WTC11 (cell line): ENCODE measurements at regions of chr17 and their contacts with region 1.

Region 1: DNA sequence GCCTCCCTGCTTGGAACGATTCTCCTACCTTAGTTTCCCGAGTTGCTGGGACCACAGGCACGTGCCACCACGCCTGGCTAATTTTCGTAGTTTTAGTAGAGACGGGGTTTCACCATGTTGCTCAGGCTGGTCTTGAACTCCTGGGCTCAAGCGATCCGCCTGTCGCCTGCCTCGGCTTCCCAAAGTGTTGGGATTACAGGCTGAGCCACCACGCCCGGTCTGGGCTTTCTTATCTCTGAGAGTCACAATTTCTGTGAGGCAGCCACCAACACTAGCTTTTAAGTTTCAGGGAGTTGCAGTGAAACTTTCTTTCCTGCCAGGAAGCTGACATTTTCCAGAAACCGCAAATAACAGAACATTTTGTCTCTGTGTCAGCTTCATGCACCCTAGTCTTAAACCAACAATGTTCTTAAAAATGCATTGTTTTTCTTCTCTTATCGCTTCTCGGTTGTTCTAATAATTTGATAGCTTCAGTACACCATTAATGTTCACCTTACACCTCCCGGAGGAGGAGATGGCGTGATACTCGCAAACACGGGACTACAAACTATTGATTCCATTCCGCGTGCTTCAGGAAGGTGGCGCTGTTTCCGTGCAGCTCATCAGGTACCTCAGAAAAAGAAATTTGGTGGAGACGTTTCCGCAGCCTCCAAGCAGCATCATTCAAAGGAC is 7.4 kb upstream of the DHRS7B start:
- DNase-seq: peak; percentile 70
- ATAC-seq: peak; percentile 86
- H3K4me3 Mint-ChIP-seq: 0 out of 2 replicates have a peak overlapping the region, but pooled peaks have one; percentile 17
- H3K27ac Mint-ChIP-seq: peak overlapping the region; percentile 24; the same call in 1 of the 2 replicates
- H3K4me1 Mint-ChIP-seq: peaks cover 18% of the 10 kb centered on the region
- H3K27me3 Mint-ChIP-seq: peaks cover 3% of the 10 kb centered on the region; the same call in 1 of the 2 replicates
- CTCF ChIP-seq: peak; percentile 65

Region 2: DNA sequence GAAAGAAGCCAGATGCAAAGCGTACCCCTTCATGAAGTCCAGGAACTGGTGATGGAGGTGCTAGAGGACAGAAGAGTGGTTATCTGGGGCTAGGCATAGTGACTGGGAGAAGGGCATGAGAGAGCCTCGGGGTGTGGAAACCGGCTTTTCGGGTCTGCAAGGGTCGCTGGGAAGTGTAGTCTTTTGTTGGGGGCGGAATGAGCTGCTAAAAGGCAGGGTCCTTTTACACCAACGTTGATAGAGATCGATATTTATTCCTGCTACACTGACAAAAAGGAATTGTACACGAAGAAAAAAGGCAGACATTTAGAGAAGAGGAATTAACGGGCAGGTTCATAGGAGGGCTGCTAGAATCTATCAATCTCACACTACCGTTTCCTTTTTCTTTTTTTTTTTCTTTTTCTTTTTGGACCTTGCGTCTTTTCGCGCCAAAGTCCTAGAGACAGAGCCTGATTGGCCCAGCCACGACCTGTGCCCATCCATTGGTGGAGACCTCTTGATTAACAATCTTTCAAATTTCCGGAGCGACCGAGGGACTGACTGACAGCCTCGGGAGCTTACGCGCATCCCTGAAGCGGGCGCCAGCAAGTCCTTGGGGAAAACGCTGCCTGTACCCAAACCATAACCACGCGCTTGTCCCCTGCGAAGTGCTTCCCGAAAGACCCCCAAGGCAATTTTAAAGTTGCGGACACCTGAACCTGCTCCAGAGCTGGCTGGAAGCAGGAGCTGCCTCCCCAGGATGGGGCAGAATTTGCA is 20.3 kb before region 1 on chr17:
- CTCF ChIA-PET with region 1: interaction called, 31 read pairs
- POLR2A ChIA-PET with region 1: interaction called, 5 read pairs
- DNase-seq: peak; percentile 81
- ATAC-seq: peak; percentile 95
- H3K4me3 Mint-ChIP-seq: peak overlapping the region; percentile 97
- H3K27ac Mint-ChIP-seq: peak overlapping the region; percentile 99
- H3K4me1 Mint-ChIP-seq: no peaks in the 10 kb centered on the region
- H3K27me3 Mint-ChIP-seq: no peaks in the 10 kb centered on the region
- CTCF ChIP-seq: no peak

Region 3: GRCh38 chr17:21108651-21109050 is 10.7 kb before region 1 on chr17:
- CTCF ChIA-PET with region 1: interaction called, 19 read pairs
- POLR2A ChIA-PET with region 1: no interaction called
- DNase-seq: no peak
- ATAC-seq: no peak
- H3K4me3 Mint-ChIP-seq: no peak overlapping the region
- H3K27ac Mint-ChIP-seq: peak overlapping the region; percentile 45
- H3K4me1 Mint-ChIP-seq: peaks cover 59% of the 10 kb centered on the region
- H3K27me3 Mint-ChIP-seq: no peaks in the 10 kb centered on the region
- CTCF ChIP-seq: no peak

Region 4: GRCh38 chr17:21146362-21147015 is 27.1 kb after region 1 on chr17:
- CTCF ChIA-PET with region 1: no interaction called
- POLR2A ChIA-PET with region 1: no interaction called
- DNase-seq: no peak
- ATAC-seq: no peak
- H3K4me3 Mint-ChIP-seq: no peak overlapping the region
- H3K27ac Mint-ChIP-seq: no peak overlapping the region
- H3K4me1 Mint-ChIP-seq: peaks cover 10% of the 10 kb centered on the region
- H3K27me3 Mint-ChIP-seq: no peaks in the 10 kb centered on the region; the same call in 1 of the 2 replicates
- CTCF ChIP-seq: no peak

Region 5: GRCh38 chr17:21204935-21205334 is 85.6 kb after region 1 on chr17:
- CTCF ChIA-PET with region 1: interaction called, 10 read pairs
- POLR2A ChIA-PET with region 1: no interaction called
- DNase-seq: no peak
- ATAC-seq: no peak
- H3K4me3 Mint-ChIP-seq: no peak overlapping the region
- H3K27ac Mint-ChIP-seq: peak overlapping the region; percentile 63
- H3K4me1 Mint-ChIP-seq: peaks cover 40% of the 10 kb centered on the region
- H3K27me3 Mint-ChIP-seq: no peaks in the 10 kb centered on the region
- CTCF ChIP-seq: no peak

Region 6: DNA sequence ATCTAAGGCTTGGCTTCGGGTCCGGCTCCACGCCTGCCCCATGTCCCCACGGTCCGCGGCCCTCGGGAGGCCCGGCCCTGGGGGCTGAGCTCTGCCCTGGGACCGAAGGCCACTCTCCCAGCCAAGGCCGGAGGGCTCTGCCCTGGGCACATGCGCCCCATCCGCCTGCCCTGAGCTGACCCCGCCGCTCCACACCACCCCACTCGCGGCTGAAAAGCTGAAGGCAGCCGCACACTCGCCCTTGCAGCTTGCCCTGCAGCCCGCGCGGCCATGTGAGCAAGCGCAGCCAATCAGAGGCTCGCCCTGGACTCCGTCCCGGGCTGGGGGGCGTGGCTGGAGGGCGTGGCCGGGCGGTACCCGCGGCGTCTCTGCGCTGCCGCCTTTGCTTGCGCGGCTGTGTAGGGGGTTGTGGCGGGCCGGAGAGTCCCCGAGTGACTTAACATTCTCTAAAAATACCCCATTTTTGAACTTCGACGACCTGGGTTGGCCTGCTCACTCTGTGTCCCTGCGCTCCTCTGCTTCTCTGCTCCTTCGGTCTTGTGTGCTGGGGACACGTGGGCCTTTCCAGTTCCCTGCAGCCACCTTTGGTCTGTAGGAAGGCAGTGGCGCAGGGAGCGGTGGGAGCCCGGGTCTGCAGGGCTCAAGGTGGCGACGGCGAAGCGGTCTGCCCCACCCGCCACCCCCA is 156.3 kb after region 1 on chr17:
- CTCF ChIA-PET with region 1: interaction called, 10 read pairs
- POLR2A ChIA-PET with region 1: no interaction called
- DNase-seq: peak; percentile 93
- ATAC-seq: peak; percentile 81
- H3K4me3 Mint-ChIP-seq: peak overlapping the region; percentile 76
- H3K27ac Mint-ChIP-seq: no peak overlapping the region
- H3K4me1 Mint-ChIP-seq: peaks cover 9% of the 10 kb centered on the region
- H3K27me3 Mint-ChIP-seq: peaks cover 48% of the 10 kb centered on the region
- CTCF ChIP-seq: no peak